ENCODE measurements at regions of chr15 and their contacts with region 1.

Region 1: DNA sequence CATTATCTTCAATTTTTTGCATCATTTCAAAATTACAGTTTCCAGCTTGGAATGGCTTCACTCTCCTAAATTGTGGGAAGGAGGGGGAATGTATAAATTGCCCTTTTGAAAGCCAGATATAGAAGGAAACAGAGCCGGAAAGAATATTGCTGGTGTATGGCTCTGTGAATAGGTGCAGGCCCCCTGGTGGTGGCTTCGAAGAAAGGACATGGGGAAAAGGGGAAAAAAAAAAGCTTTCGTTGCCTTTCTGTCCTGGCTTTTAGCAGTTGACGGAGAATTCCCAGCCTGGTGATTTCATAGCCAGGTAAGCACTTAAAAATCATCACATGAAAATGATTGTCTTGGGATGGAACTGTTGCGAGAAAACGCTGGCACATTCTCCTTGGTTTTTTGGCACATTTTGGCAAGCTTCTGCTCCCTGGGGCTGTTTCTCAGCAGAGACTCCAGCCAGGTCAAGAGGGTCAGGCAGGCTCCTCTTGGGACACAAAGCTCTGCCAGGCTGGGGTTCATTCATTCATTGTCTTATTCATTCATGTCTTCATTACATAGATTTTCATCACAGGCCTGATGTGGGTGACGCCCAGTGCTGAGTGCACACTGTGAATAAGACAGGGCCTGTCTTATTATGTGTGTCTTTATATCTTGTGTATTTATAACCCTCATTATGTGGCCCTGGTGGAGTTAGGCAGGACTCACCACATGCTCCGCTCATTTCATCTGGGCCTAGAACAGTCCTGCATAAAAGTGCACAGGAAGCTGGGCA is 300.0 kb upstream of the TPM1 start:
- DNase-seq: peak; percentile 51
- H3K4me3 ChIP-seq: no peak overlapping the region
- H3K27ac ChIP-seq: peak overlapping the region; percentile 6
- H3K4me1 ChIP-seq: no peaks in the 10 kb centered on the region
- H3K27me3 ChIP-seq: no peaks in the 10 kb centered on the region
- CTCF ChIP-seq: peak; percentile 69

Region 2: DNA sequence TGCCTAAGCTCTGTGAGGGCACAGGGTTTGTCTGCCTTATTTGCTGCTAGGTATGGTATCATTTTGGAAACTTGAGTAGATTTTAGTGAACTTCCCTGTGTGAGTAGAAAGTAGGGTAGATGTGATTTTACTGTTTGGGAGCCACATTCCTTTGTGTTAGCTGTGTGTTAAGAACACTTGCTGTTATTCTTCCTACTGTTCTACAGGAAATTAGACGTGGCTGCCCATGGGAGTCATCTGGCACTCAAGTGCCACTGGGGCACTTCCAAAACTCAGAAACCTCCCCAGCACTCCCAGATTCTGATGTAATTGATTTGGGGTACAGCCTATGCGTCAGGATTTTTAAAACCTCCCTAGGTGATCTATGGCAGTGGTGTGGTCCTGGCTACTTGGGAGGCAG is 207.6 kb before region 1 on chr15:
- intact Hi-C with region 1: loop called (anchors 5 kb)
- DNase-seq: no peak
- H3K4me3 ChIP-seq: no peak overlapping the region
- H3K27ac ChIP-seq: no peak overlapping the region
- H3K4me1 ChIP-seq: no peaks in the 10 kb centered on the region
- H3K27me3 ChIP-seq: no peaks in the 10 kb centered on the region
- CTCF ChIP-seq: no peak

Region 3: DNA sequence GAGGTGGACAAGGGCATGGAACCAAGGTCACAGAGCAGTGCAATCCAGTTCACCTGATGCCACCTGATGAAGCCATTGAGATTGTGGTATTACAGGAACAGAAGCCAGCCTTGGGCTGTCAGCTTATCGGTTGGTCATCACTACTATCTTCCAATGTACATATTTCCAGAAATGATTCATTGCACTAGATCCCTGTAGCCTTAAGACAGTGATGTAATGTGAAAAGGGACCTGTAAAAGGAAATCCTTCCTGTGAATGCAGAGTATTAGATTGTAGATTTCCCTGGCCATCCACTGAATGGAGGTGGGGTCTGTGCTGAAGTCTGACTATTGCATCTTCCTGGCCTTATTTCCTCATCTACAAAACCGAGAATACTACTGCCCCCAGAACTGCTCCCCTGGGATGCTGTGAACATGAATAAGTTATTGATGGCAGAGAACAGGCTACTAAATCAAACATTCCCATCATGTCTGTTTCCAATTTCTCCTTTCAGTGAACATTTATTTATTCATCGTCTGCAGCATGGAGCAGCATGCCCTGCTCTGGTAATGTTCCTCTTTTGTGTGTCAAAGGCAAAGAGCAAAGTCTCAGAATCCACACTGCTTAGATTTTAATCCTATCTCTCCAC is 252.6 kb after region 1 on chr15:
- intact Hi-C with region 1: no loop called
- DNase-seq: no peak
- H3K4me3 ChIP-seq: no peak overlapping the region
- H3K27ac ChIP-seq: no peak overlapping the region
- H3K4me1 ChIP-seq: no peaks in the 10 kb centered on the region
- H3K27me3 ChIP-seq: no peaks in the 10 kb centered on the region
- CTCF ChIP-seq: no peak